ENCODE measurements at regions of chr11 and their contacts with region 1.

Region 1: GRCh38 chr11:26473216-26474194 is 98.6 kb downstream of the MUC15 start:
- DNase-seq: no peak
- ATAC-seq: peak; percentile 39
- H3K4me3 ChIP-seq: no peak overlapping the region
- H3K27ac ChIP-seq: no peak overlapping the region
- H3K4me1 ChIP-seq: no peaks in the 10 kb centered on the region
- H3K27me3 ChIP-seq: no peaks in the 10 kb centered on the region
- CTCF ChIP-seq: no peak
- EP300 ChIP-seq: no peak
- POLR2A ChIP-seq: no peak
- RAD21 ChIP-seq: no peak

Region 2: DNA sequence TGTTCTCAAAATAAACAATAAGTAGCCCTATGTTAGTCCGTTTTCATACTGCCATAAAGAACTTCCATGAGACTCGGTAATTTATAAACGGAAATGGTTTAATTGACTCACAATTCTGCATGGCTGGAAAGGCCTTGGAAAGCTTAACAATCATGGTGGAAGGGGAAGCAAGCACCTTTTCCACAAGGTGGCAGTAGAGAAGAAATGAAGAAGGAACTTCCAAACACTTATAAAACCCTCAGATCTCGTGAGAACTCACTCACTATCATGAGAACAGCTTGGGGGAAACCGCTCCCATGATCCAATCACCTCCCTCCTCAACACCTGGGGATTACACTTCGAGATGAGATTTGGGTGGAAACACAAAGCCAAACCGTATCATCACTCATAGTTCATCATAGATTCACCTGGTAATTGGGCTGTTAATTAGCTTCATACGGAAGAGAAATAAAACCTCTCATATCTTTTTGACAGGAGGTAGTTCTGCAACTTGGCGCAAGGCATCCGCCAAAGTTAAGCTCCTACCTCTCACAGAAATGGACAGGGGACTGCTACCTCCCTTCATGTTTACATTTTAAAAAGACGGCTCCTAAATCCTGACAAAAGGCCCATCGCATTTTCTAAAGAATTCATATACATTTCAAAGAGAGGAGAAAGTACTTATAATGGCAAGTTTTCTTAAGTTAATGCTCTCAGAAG is 49.6 kb after region 1 on chr11:
- CTCF ChIA-PET with region 1: interaction called, 10 read pairs
- POLR2A ChIA-PET with region 1: no interaction called
- RAD21 ChIA-PET with region 1: interaction called, 4 read pairs
- SMC1A ChIA-PET with region 1: interaction called, 7 read pairs
- in situ Hi-C with region 1: no loop called
- intact Hi-C with region 1: no loop called
- DNase-seq: no peak
- ATAC-seq: peak; percentile 64
- H3K4me3 ChIP-seq: no peak overlapping the region
- H3K27ac ChIP-seq: no peak overlapping the region
- H3K4me1 ChIP-seq: no peaks in the 10 kb centered on the region
- H3K27me3 ChIP-seq: no peaks in the 10 kb centered on the region
- CTCF ChIP-seq: peak; percentile 30 to 40 (median 32); a peak in 4 of 6 replicates
- EP300 ChIP-seq: no peak
- POLR2A ChIP-seq: no peak
- RAD21 ChIP-seq: peak; percentile 33

Measured in GM12878 (cell line).